Activated T-helper 1 cell treated with anti-CD3 and anti-CD28 coated beads, Interleukin-12 subunit alpha, Interleukin-12 subunit beta, Interleukin-2, Interleukin-4 antibody, amounts not matched to agents 30 ng/mL and 10 ng/mL and 1 ng/mL, durations not matched to agents 14 hours and 24 hours and 36 hours (primary cell): ENCODE measurements at regions of chr7 and their contacts with region 1.

Region 1: DNA sequence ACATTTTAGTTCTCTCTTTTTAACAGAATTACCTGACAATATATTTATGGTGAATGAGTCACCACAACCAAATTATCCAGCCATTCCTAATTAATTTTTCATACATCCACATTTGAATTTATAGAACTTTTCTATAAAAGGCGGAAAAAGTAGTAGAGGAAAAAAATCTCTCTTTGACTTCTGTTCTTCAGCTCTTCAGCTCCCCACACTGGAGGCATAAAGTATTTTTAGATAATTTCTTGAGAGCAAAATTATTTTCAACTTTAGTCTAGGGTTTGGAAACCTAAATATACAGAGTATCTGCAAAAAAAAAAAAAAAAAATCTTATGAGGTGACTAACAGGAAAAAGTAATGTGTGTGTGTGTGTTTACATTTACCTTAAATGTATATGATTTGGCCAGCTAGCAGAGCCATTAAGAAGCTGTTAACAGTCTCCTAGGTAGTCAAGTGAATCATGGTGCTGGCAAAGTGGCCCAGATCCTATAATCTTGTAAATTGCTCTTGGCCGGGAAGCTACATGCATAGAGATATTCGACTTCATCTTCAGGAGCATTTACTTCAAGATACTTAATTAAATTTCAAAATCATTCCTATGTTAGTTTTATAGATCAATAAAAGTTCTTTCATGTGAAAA is 383.1 kb upstream of the STEAP1 start:
- DNase-seq: no peak
- H3K4me3 Mint-ChIP-seq: no peak overlapping the region
- H3K27ac Mint-ChIP-seq: no peak overlapping the region
- H3K4me1 Mint-ChIP-seq: no peaks in the 10 kb centered on the region
- H3K27me3 Mint-ChIP-seq: no peaks in the 10 kb centered on the region

Region 2: DNA sequence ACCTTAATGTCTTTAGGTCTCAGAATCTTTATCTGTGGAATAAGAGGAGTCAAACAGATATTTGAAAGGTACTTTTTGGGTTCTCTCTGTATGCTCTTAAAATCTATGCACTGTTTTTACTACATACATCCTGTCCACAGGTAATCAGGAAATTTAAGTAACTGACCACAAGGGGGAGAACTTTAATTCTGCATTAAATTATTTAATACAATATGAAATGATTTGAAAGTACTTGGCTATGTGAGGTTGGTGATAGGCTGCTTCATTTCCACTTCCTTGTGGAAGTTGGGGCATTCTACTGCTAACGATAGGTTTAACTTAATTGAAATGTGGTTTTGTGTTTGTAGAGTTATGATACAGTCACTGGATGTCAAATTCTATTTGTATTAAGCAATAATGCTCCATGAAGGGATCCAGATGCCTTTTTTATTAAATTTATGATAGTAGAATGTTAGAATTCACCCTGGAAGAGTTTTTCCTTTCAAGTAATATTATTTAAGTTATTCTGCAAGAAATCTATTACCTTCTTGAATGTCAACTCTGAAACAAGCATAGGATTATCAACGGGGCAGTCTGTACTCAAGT is 981.5 kb before region 1 on chr7:
- intact Hi-C with region 1: loop called (anchors 5 kb)
- DNase-seq: no peak
- H3K4me3 Mint-ChIP-seq: no peak overlapping the region
- H3K27ac Mint-ChIP-seq: no peak overlapping the region
- H3K4me1 Mint-ChIP-seq: no peaks in the 10 kb centered on the region
- H3K27me3 Mint-ChIP-seq: peaks cover 2% of the 10 kb centered on the region

Region 3: GRCh38 chr7:89642173-89642572 is 128.9 kb before region 1 on chr7:
- intact Hi-C with region 1: no loop called
- DNase-seq: no peak
- H3K4me3 Mint-ChIP-seq: no peak overlapping the region
- H3K27ac Mint-ChIP-seq: no peak overlapping the region
- H3K4me1 Mint-ChIP-seq: no peaks in the 10 kb centered on the region
- H3K27me3 Mint-ChIP-seq: peaks cover 3% of the 10 kb centered on the region

Region 4: DNA sequence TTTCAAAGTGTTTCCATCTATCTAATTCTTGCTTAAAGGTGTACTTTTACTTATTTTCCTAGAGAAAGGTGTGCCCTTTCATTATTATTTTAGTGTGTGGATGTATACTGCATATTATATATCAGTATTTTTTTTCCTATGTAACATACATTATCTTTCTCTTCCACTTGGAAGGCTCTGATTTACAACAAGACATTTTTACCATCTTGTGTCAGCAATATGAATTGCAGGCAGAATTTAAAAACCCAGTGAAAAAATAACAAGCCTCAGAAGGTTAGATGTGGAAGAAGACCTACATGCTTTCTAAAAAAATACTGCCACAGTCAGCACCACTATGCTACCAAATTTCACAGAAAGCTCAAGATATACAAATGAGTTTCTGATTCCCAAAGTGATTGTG is 55.4 kb after region 1 on chr7:
- intact Hi-C with region 1: no loop called
- DNase-seq: no peak
- H3K4me3 Mint-ChIP-seq: no peak overlapping the region
- H3K27ac Mint-ChIP-seq: no peak overlapping the region
- H3K4me1 Mint-ChIP-seq: no peaks in the 10 kb centered on the region
- H3K27me3 Mint-ChIP-seq: no peaks in the 10 kb centered on the region

Region 5: GRCh38 chr7:90595801-90596671 is 824.9 kb after region 1 on chr7 and contains the start of gene CDK14:
- intact Hi-C with region 1: no loop called
- DNase-seq: peak; percentile 24
- H3K4me3 Mint-ChIP-seq: peak within 1 kb of the TSS; percentile 83
- H3K27ac Mint-ChIP-seq: no peak within 1 kb of the TSS
- H3K4me1 Mint-ChIP-seq: peaks cover 16% of the 10 kb centered on the region
- H3K27me3 Mint-ChIP-seq: peaks cover 61% of the 10 kb centered on the region
- total RNA-seq, gene CDK14: 1.6 and 1.9 TPM in 2 replicates